ENCODE measurements at regions of chr19 and their contacts with region 1.

Region 1: DNA sequence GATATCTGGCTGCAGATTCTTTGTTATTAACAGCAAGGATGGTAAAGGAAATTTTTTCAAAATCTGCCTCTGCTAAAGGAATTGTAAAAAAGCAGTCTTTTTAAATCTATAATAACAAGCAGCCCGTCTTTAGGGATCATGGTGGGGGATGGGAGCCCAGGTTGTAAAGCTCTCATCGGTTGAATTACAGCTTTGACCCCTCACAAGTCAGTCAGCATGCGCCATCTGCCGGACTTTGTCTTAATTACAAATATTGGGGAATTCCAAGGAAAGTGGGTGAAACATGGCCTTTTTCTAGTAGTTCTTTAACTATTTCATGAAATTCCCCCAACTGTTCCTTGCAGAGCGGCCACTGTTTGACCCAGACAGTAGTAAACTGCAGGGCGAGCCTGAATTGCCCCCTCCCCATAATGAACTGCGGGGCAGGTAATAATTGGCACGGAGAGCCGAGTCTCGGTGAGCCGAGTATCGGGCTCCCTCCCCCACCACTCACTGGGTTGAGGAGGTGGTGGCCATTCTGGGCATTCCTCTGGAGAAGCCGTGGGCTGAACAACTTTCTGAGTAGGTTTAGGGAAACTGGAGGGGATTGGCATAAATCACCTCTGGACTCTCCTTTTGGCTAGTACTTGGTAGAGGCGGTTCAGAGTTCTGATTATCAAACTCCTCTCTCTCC is 11.6 kb downstream of the ZNF578 start:
- DNase-seq: peak; percentile 73
- ATAC-seq: peak; percentile 90
- H3K4me3 Mint-ChIP-seq: peak overlapping the region; percentile 14
- H3K27ac Mint-ChIP-seq: peak overlapping the region; percentile 55; the same call in 1 of the 2 replicates
- H3K4me1 Mint-ChIP-seq: peaks cover 33% of the 10 kb centered on the region
- H3K27me3 Mint-ChIP-seq: no peaks in the 10 kb centered on the region; the same call in 1 of the 2 replicates
- CTCF ChIP-seq: peak; percentile 28; the same call in 1 of the 2 replicates

Region 2: DNA sequence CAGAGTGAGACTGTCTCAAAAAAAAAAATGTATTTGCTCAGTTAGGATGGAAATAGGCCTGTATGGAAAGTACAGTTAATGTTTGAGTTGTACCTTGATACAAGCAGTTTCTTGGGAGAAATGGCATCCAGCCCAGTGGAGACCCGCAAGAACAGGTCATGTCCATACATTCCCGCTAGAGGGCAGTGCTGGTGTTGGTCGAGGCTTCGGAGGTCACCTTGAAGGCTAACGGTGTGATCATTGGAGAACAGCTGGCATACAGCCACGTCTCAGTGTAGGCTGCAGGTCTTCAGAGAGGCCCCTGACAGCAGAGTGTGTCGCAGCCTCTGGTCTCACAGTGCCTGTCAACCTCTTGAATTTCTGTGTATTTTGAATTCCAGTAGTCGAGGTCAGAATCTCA is 121.4 kb before region 1 on chr19:
- CTCF ChIA-PET with region 1: interaction called, 11 read pairs
- POLR2A ChIA-PET with region 1: no interaction called
- DNase-seq: peak; percentile 83
- ATAC-seq: peak; percentile 99
- H3K4me3 Mint-ChIP-seq: no peak overlapping the region
- H3K27ac Mint-ChIP-seq: no peak overlapping the region; the same call in 1 of the 2 replicates
- H3K4me1 Mint-ChIP-seq: peaks cover 4% of the 10 kb centered on the region
- H3K27me3 Mint-ChIP-seq: no peaks in the 10 kb centered on the region
- CTCF ChIP-seq: peak; percentile 87

Region 3: DNA sequence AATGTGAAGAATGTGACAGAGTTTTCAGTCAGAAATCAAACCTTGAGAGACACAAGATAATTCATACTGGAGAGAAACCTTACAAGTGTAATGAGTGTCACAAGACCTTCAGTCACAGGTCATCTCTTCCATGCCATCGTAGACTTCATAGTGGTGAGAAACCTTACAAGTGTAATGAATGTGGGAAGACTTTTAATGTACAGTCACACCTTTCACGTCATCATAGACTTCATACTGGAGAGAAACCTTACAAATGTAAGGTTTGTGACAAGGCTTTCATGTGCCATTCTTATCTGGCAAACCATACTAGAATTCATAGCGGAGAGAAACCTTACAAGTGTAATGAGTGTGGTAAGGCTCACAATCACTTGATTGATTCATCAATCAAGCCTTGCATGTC is 46.8 kb after region 1 on chr19:
- CTCF ChIA-PET with region 1: no interaction called
- POLR2A ChIA-PET with region 1: no interaction called
- DNase-seq: no peak
- ATAC-seq: no peak
- H3K4me3 Mint-ChIP-seq: no peak overlapping the region
- H3K27ac Mint-ChIP-seq: no peak overlapping the region
- H3K4me1 Mint-ChIP-seq: peaks cover 7% of the 10 kb centered on the region
- H3K27me3 Mint-ChIP-seq: no peaks in the 10 kb centered on the region
- CTCF ChIP-seq: no peak

Region 4: GRCh38 chr19:52590728-52591127 is 125.8 kb after region 1 on chr19:
- CTCF ChIA-PET with region 1: no interaction called
- POLR2A ChIA-PET with region 1: no interaction called
- DNase-seq: peak; percentile 52
- ATAC-seq: peak; percentile 46; the same call in 1 of the 2 replicates
- H3K4me3 Mint-ChIP-seq: no peak overlapping the region
- H3K27ac Mint-ChIP-seq: peak overlapping the region; percentile 53; the same call in 1 of the 2 replicates
- H3K4me1 Mint-ChIP-seq: peaks cover 9% of the 10 kb centered on the region
- H3K27me3 Mint-ChIP-seq: no peaks in the 10 kb centered on the region
- CTCF ChIP-seq: no peak

Region 5: DNA sequence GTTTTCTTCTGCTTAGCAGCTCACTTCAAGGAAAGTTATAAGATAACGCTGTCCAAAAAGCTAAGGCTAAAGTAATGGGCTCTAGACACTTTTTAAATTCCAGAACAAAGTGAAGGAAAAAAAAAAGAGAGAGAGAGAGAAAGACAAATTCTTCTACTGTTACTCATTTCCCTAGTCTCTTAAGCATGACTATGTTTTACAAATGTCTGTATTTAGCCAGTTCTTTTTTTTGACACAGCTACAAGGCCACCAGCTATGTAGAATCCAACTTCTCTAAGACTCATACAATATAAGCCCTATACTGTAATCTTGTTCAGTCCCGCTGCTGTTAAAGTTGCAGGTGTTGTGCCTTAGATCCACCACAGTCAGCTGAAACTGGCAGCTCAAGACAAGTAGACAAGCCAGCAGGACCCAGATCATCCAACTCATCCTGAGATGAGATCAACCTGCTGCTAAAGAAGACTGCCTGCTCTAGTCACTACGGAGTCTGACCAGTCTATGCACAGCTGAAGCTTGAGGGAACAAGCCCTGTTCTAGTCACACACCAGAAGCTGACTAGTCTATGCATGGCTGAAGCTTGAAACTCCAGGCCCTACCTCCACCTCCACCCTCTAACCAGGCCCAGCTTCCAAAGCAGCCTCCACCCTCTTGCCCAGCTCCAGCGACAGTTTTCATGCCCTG is 183.5 kb after region 1 on chr19:
- CTCF ChIA-PET with region 1: no interaction called
- POLR2A ChIA-PET with region 1: no interaction called
- DNase-seq: no peak
- ATAC-seq: no peak
- H3K4me3 Mint-ChIP-seq: no peak overlapping the region
- H3K27ac Mint-ChIP-seq: no peak overlapping the region
- H3K4me1 Mint-ChIP-seq: no peaks in the 10 kb centered on the region
- H3K27me3 Mint-ChIP-seq: no peaks in the 10 kb centered on the region
- CTCF ChIP-seq: no peak